Dorsolateral prefrontal cortex (tissue), 120 donors: ENCODE measurements at regions of chr7 and their contacts with region 1.

Region 1: DNA sequence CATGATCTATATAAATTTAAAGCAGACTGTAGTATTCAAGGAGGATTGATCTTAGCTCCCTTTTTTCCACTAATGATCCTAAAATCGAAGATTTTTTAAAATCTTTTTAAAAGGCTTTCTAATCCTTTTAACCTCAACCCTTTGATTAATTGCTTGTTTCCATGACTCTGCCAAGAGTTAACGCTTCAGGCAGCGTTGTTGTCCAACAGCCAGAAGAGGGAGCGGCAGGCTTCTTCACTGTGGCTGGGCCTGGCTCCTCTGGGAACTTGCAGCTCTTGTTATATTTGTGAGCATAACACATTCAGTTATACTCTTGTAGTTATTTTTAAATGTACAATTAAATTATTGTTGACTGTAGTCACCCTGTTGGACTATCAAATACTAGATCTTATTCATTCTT is 26.3 kb downstream of the CRCP start:
- DNase-seq: peak; percentile 43 to 84 (median 64)
- H3K4me3 ChIP-seq: no peak overlapping the region
- H3K27ac ChIP-seq: peak overlapping the region in 18 of 59 donors; percentile 3 to 59 (median 28)
- H3K27me3 ChIP-seq: no peaks in the 10 kb centered on the region
- CTCF ChIP-seq: peak in 53 of 56 donors; percentile 26 to 77 (median 57)

Region 2: DNA sequence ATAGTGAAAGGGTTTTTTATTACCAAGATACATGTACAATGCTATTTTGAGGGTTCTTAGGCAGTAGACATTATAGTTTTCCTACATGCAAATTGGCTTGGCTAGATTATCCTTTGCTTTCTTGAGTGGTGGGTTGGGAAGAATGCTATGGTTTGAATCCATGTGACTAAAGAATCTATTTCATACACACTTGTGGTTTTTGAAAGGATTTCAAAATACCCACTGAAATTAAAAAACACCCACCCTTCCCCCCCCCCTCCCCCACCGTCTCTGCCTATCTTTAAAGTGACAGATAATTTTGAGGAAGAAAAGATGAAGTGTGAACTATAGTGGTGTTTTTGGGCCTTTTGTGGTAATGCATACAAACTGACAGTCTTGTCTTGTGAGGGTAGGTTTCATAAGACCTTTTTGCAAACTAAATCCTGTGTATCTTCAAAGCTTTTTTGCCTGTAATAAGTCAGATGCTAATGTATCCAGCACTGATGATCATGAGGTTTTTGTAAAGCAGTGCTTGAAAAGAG is 155.1 kb after region 1 on chr7:
- intact Hi-C with region 1: no loop called
- DNase-seq: no peak
- H3K4me3 ChIP-seq: no peak overlapping the region
- H3K27ac ChIP-seq: no peak overlapping the region
- H3K27me3 ChIP-seq: no peaks in the 10 kb centered on the region
- CTCF ChIP-seq: no peak

Region 3: GRCh38 chr7:66413379-66414114 is 272.6 kb after region 1 on chr7:
- intact Hi-C with region 1: loop called in 1 of 2 experiments (anchors 5 kb)
- DNase-seq: peak; percentile 79 to 95 (median 88)
- H3K4me3 ChIP-seq: peak overlapping the region; percentile 52 to 96 (median 74)
- H3K27ac ChIP-seq: peak overlapping the region in 58 of 59 donors; percentile 1 to 92 (median 76)
- H3K27me3 ChIP-seq: no peaks in the 10 kb centered on the region
- CTCF ChIP-seq: peak in 53 of 56 donors; percentile 19 to 71 (median 48)